AG04450 (cell line): ENCODE measurements at regions of chr10 and their contacts with region 1.

Region 1: GRCh38 chr10:112434988-112435619 is 11.6 kb downstream of the ZDHHC6 start:
- DNase-seq: no peak
- H3K4me3 ChIP-seq: no peak overlapping the region
- H3K27ac ChIP-seq: no peak overlapping the region
- H3K27me3 ChIP-seq: no peaks in the 10 kb centered on the region
- CTCF ChIP-seq: peak; percentile 47

Region 2: DNA sequence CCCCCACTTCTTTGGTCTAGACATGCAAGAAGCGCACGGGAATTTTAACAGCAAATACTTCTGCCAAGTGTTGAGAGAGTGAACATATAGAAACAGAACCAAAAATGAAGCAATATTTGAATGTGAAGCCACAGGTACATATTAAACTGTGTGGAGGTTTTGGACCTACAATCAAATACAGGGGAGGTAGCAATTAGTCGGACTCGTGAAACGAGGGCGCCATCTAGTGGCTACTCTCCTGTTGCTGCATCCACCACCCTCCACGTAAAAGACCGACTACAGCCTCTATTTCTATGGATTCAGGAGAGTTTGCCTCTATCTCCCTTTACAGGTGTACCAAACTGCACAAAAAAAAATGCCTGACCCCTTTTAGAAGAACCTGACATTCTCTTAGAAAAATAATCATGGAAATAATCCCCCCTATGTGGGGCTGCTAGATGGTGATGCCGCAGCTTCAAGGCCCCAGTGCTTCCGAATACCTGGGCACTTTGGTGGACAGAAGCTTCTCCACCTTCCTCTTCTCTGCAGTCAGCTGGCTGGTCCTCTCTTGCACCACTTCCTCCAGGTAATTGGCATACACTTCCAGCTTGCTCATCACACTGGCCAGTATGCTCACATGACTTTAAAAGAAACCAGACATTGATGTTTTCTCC is 120.2 kb before region 1 on chr10:
- CTCF ChIA-PET with region 1: interaction called, 33 read pairs
- POLR2A ChIA-PET with region 1: no interaction called
- DNase-seq: peak; percentile 55
- H3K4me3 ChIP-seq: no peak overlapping the region
- H3K27ac ChIP-seq: no peak overlapping the region
- H3K27me3 ChIP-seq: peaks cover 9% of the 10 kb centered on the region
- CTCF ChIP-seq: peak; percentile 93

Region 3: DNA sequence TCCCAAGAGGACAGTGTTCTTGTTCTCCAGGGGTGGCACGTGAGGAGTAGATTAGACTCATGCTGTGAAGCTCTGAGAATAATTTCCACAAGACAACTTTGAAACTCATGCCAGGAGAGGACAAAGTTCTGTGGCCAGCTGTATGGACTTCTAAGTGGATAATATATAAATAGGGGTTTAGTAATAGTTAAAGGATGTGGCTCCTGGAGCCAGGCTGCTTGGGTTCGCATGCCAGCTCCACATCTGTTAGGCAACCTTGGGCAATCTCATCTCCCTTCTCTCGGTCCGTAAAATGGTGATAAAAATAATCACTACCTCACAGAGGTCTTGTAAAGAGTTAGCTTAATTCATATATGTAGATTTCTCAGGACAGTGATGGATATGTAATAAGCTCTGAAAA is 25.3 kb before region 1 on chr10:
- CTCF ChIA-PET with region 1: interaction called, 12 read pairs
- POLR2A ChIA-PET with region 1: no interaction called
- DNase-seq: no peak
- H3K4me3 ChIP-seq: no peak overlapping the region
- H3K27ac ChIP-seq: no peak overlapping the region
- H3K27me3 ChIP-seq: peaks cover 2% of the 10 kb centered on the region
- CTCF ChIP-seq: no peak

Region 4: GRCh38 chr10:112446855-112447711 is 12.0 kb after region 1 on chr10 and contains the starts of genes VTI1A and ZDHHC6:
- CTCF ChIA-PET with region 1: interaction called, 17 read pairs
- POLR2A ChIA-PET with region 1: no interaction called
- DNase-seq: peak; percentile 61
- H3K4me3 ChIP-seq: peak within 1 kb of the TSS; percentile 99
- H3K27ac ChIP-seq: peak within 1 kb of the TSS; percentile 92
- H3K27me3 ChIP-seq: no peaks in the 10 kb centered on the region
- CTCF ChIP-seq: peak; percentile 43
- polyA plus RNA-seq, gene VTI1A: 17.1 and 20.4 TPM in 2 replicates
- polyA plus RNA-seq, gene ZDHHC6: 26.2 and 37.5 TPM in 2 replicates

Region 5: DNA sequence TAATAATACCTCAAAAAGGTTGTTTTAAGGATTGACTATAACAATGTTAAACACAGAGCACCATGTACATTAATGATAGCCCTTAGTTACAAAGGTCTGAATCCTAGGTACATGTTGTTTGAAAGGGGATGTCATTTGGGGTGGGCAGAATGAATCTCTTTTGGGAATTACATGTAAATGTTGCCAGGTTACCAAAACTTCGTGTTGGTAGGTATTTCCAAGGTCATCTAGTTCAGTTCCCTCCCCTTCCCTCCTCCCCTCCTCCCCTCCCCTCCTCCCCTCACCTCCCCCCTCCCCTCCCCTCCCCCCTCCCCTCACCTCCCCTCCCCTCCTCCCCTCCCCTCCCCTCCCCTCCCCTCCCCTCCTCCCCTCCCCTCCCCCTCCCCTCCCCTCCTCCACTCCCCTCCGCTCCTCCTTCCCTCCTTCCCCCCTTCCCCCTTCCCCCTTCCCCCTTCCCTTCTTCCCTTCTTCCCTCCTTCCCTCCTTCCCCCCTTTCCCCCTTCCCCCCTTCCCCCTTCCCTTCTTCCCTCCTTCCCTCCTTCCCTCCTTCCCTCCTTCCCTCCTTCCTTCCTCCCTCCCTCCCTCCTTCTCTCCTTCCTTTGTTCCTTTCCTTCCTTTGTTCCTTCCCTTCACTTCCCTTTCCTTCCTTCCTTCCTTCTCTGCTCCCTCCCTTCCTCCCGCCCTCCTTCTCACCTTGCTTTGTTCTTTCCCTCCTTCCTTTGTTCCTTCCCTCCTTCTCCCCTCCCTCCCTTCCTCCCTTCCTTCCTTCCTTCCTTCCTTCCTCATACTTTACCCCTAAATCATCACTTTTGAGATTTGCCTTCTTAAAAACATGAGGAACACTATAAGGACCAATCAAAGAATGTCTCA is 20.0 kb after region 1 on chr10:
- CTCF ChIA-PET with region 1: interaction called, 11 read pairs
- POLR2A ChIA-PET with region 1: no interaction called
- DNase-seq: no peak
- H3K4me3 ChIP-seq: no peak overlapping the region
- H3K27ac ChIP-seq: no peak overlapping the region
- H3K27me3 ChIP-seq: no peaks in the 10 kb centered on the region
- CTCF ChIP-seq: no peak